ENCODE measurements at regions of chr4 and their contacts with region 1.

Region 1: DNA sequence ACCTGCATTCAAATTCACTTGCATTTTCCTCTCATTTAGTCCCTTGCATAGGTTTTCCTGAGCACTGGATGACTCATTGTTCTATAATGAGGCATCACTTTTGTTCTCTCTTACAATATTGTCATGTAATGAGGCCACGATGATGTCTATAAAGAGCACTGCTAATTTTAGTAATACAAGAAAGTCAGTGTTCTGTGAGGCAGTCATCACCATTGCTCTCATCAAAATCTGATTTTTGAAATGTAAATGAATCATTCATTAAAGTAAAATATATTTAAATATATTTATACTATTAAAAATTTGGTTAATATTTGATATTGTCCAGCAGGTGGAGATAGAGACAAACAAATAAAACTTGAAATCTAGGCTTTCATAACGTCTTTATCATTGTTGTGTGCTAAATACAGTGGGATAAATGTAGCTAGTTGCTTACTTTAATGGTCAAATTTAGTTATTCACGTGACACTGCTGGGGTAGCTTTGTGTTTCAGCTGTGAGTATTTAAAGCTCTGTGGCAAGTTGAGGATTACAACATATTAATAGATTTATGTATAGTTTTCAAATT is 15.4 kb downstream of the HMGB2 start:
- DNase-seq: peak; percentile 62
- H3K4me3 ChIP-seq: no peak overlapping the region
- H3K27ac ChIP-seq: no peak overlapping the region
- H3K4me1 ChIP-seq: peaks cover 11% of the 10 kb centered on the region
- CTCF ChIP-seq: peak; percentile 72; the same call in 1 of the 2 replicates

Region 2: GRCh38 chr4:173159791-173160190 is 158.9 kb before region 1 on chr4:
- CTCF ChIA-PET with region 1: no interaction called
- POLR2A ChIA-PET with region 1: no interaction called
- intact Hi-C with region 1: no loop called
- DNase-seq: no peak
- H3K4me3 ChIP-seq: no peak overlapping the region
- H3K27ac ChIP-seq: no peak overlapping the region
- H3K4me1 ChIP-seq: no peaks in the 10 kb centered on the region
- CTCF ChIP-seq: no peak

Region 3: DNA sequence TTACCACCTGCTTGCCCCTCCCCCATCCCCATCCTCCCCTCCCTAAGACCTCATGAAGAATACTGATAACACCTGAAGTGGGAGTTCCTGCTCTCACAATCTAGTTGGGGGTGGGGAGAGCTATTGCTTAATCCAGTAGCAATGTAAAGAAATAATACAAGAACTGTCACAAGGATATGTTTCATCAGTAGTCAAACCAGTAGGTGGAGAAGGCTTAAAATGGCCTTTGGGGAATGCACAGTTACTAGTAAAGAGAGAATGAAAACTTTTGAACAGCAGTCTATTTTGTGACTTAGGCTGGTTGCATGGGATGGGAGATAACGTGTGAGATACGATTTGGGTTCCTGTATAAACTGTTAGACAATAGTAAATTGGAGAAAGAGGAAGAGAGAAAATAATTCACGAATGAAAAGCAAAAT is 144.1 kb before region 1 on chr4:
- CTCF ChIA-PET with region 1: no interaction called
- POLR2A ChIA-PET with region 1: no interaction called
- intact Hi-C with region 1: no loop called
- DNase-seq: peak; percentile 26
- H3K4me3 ChIP-seq: no peak overlapping the region
- H3K27ac ChIP-seq: no peak overlapping the region
- H3K4me1 ChIP-seq: peaks cover 56% of the 10 kb centered on the region
- CTCF ChIP-seq: no peak

Region 4: GRCh38 chr4:173494013-173494970 is 175.6 kb after region 1 on chr4:
- CTCF ChIA-PET with region 1: no interaction called
- POLR2A ChIA-PET with region 1: no interaction called
- intact Hi-C with region 1: loop called (anchors 1 kb)
- DNase-seq: peak; percentile 77
- H3K4me3 ChIP-seq: peak overlapping the region; percentile 53
- H3K27ac ChIP-seq: no peak overlapping the region
- H3K4me1 ChIP-seq: peaks cover 5% of the 10 kb centered on the region
- CTCF ChIP-seq: peak; percentile 87

Measured in OCI-LY7 (cell line).